Activated CD4-positive, alpha-beta memory T cell treated with anti-CD3 and anti-CD28 coated beads for 36 hours (primary cell): ENCODE measurements at regions of chr10 and their contacts with region 1.

Region 1: GRCh38 chr10:100229819-100230422 is 525 bp upstream of the CHUK start:
- DNase-seq: no peak
- H3K4me3 Mint-ChIP-seq: peak overlapping the region; percentile 88
- H3K27ac Mint-ChIP-seq: peak overlapping the region; percentile 81
- H3K4me1 Mint-ChIP-seq: peaks cover 25% of the 10 kb centered on the region
- H3K27me3 Mint-ChIP-seq: no peaks in the 10 kb centered on the region

Region 2: DNA sequence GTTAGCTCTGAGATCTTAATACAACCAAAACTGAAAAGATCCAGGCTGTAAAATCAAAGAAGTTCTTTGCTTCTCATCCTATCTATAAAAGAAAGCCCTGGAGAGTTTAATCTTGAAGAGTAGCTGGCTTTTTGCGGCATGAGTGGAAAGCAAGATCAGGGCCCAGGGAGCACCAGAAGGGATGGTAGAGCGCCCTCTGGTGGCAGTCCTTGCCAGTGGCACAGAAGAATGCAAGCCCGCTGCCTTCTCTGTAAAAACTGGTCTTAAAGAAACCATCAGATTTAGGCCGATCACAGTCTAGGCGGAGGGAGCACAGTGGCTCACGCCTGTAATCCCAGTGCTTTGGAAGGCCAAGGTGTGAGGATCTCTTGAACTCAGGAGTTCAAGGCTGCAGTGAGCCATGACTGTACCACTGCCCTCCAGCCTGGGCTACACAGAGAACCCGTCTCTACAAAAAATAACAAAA is 183.9 kb before region 1 on chr10:
- CTCF ChIA-PET with region 1: no interaction called
- POLR2A ChIA-PET with region 1: no interaction called
- intact Hi-C with region 1: no loop called
- DNase-seq: peak; percentile 87
- H3K4me3 Mint-ChIP-seq: no peak overlapping the region
- H3K27ac Mint-ChIP-seq: no peak overlapping the region
- H3K4me1 Mint-ChIP-seq: peaks cover 3% of the 10 kb centered on the region
- H3K27me3 Mint-ChIP-seq: no peaks in the 10 kb centered on the region

Region 3: DNA sequence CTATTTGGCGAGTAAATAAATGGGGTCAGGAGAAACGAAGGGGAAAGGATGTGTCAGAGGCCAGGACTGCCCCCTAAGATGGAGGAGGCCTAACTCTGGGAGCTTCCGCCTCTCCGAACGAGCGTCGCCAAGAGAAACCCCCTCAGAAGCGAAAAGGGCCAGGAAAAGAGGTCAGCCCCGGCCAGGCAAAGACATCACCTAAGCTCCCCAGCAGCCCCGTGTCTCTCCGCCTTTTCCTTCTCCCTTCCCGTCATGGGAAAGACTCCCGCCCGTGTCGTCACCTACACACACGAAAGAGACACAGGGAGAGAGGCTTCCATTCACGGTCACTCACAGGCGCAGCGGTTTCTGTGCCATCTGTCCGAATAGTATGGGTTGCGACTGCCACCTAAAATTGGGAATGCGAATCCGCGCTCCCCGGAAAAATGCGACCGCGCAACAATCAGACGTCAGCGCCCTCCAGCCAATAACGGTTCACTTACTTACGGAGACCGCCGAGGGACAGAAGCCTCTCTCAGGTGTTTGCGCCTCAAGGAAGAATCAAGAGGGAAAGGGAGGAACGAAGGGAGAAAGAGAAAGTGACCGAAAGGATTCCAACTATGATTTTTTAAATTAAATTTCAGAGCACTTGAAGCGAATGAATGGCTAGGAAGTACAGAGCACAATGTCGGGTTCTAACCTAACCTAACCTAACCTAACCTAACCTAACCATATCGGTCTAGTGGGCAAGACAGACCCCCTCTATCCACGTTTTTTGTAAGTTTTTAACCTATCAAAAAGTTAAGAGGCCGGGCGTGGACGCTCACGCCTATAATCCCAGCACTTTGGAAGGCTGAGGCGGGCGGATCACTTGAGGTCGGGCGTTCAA is 37.5 kb after region 1 on chr10 and contains the start of gene CWF19L1:
- CTCF ChIA-PET with region 1: no interaction called
- POLR2A ChIA-PET with region 1: no interaction called
- intact Hi-C with region 1: loop called (anchors 1 kb)
- DNase-seq: peak; percentile 88
- H3K4me3 Mint-ChIP-seq: peak within 1 kb of the TSS; percentile 100
- H3K27ac Mint-ChIP-seq: peak within 1 kb of the TSS; percentile 98
- H3K4me1 Mint-ChIP-seq: peaks cover 22% of the 10 kb centered on the region
- H3K27me3 Mint-ChIP-seq: no peaks in the 10 kb centered on the region
- total RNA-seq, gene CWF19L1: 40.6 to 42.5 TPM